Caco-2 (cell line): ENCODE measurements at regions of chr16 and their contacts with region 1.

Region 1: DNA sequence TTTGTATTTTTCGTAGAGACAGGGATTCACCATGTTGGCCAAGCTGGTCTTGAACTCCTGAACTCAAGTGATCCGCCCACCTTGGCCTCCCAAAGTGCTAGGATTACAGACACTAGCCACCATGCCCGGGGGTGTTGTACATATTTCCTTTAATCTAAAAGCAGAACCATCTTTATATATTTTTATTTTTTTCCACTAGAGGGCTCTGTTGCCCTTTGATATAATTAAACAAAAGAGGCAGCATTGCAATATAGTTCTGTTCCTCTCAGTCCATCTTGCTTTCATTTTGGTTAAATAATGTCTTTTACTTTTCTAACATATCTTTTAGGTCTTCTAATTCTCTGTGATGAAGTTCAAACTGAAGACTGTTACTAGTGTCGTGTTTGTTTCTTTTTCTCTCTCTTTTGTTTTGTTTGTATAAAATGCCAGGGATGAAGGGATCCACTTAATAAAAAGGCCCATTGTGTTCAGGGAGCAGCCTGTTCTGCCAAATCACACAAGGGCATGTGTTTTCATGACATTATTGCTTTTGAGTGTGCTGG is 23.4 kb downstream of the WWOX start:
- DNase-seq: peak in 1 of 2 experiments; percentile 59
- H3K4me3 ChIP-seq: no peak overlapping the region
- H3K4me3 Mint-ChIP-seq: peak overlapping the region; percentile 17
- H3K27ac Mint-ChIP-seq: no peak overlapping the region
- H3K4me1 ChIP-seq: 0 out of 2 replicates have a peak, but pooled peaks cover 5% of the 10 kb centered on the region
- H3K4me1 Mint-ChIP-seq: peaks cover 25% of the 10 kb centered on the region
- H3K27me3 ChIP-seq: no peaks in the 10 kb centered on the region
- H3K27me3 Mint-ChIP-seq: no peaks in the 10 kb centered on the region
- CTCF ChIP-seq: peak; percentile 31 to 75

Region 2: GRCh38 chr16:78106686-78107085 is 16.2 kb before region 1 on chr16:
- CTCF ChIA-PET with region 1: no interaction called
- POLR2A ChIA-PET with region 1: no interaction called
- intact Hi-C with region 1: no loop called
- DNase-seq: no peak
- H3K4me3 ChIP-seq: no peak overlapping the region
- H3K4me3 Mint-ChIP-seq: no peak overlapping the region
- H3K27ac Mint-ChIP-seq: no peak overlapping the region
- H3K4me1 ChIP-seq: 0 out of 2 replicates have a peak, but pooled peaks cover 3% of the 10 kb centered on the region
- H3K4me1 Mint-ChIP-seq: peaks cover 7% of the 10 kb centered on the region
- H3K27me3 ChIP-seq: no peaks in the 10 kb centered on the region
- H3K27me3 Mint-ChIP-seq: no peaks in the 10 kb centered on the region
- CTCF ChIP-seq: no peak

Region 3: DNA sequence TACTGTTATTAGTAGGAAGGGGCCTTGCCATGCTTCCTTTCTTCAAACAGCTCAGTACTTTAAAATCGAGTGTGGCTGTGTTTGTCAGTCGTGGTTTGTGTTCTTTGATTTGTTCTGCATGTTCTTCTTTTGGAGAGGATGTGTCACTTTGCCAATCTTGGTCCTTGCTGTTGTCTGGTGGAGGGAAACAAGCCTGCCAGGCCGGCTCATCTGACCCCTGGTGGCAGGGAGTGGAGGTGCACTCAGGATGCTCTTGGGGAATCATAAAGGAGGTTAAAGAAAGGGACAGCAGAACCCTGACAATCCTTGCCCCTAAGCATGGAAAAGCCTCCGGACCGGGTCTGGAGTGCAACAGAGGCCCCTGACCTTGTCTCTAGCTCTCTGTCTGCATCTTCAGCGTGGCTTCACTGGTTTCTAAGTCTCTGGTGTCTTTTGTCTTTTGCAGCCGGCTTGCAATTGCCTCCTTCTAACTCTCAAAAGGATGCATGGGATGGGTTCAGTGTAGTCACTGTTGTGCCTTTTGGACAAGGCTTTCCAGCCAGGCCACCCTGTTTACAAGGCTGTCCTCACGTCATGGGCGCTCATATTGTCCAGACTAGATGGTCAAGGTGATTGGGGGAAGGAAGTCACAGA is 112.4 kb after region 1 on chr16:
- CTCF ChIA-PET with region 1: interaction called, 6 read pairs
- POLR2A ChIA-PET with region 1: no interaction called
- intact Hi-C with region 1: loop called (anchors 1 kb)
- DNase-seq: peak; percentile 82 to 92
- H3K4me3 ChIP-seq: no peak overlapping the region
- H3K4me3 Mint-ChIP-seq: no peak overlapping the region
- H3K27ac Mint-ChIP-seq: no peak overlapping the region
- H3K4me1 ChIP-seq: peaks cover 38% of the 10 kb centered on the region
- H3K4me1 Mint-ChIP-seq: peaks cover 45% of the 10 kb centered on the region
- H3K27me3 ChIP-seq: no peaks in the 10 kb centered on the region
- H3K27me3 Mint-ChIP-seq: no peaks in the 10 kb centered on the region
- CTCF ChIP-seq: peak; percentile 97 to 98

Region 4: GRCh38 chr16:78503602-78504001 is 380.8 kb after region 1 on chr16:
- CTCF ChIA-PET with region 1: interaction called, 5 read pairs
- POLR2A ChIA-PET with region 1: no interaction called
- intact Hi-C with region 1: loop called (anchors 2 kb)
- DNase-seq: peak; percentile 44 to 64
- H3K4me3 ChIP-seq: no peak overlapping the region
- H3K4me3 Mint-ChIP-seq: no peak overlapping the region
- H3K27ac Mint-ChIP-seq: no peak overlapping the region
- H3K4me1 ChIP-seq: peaks cover 25% of the 10 kb centered on the region
- H3K4me1 Mint-ChIP-seq: peaks cover 26% of the 10 kb centered on the region
- H3K27me3 ChIP-seq: no peaks in the 10 kb centered on the region
- H3K27me3 Mint-ChIP-seq: no peaks in the 10 kb centered on the region
- CTCF ChIP-seq: peak; percentile 70 to 88

Region 5: DNA sequence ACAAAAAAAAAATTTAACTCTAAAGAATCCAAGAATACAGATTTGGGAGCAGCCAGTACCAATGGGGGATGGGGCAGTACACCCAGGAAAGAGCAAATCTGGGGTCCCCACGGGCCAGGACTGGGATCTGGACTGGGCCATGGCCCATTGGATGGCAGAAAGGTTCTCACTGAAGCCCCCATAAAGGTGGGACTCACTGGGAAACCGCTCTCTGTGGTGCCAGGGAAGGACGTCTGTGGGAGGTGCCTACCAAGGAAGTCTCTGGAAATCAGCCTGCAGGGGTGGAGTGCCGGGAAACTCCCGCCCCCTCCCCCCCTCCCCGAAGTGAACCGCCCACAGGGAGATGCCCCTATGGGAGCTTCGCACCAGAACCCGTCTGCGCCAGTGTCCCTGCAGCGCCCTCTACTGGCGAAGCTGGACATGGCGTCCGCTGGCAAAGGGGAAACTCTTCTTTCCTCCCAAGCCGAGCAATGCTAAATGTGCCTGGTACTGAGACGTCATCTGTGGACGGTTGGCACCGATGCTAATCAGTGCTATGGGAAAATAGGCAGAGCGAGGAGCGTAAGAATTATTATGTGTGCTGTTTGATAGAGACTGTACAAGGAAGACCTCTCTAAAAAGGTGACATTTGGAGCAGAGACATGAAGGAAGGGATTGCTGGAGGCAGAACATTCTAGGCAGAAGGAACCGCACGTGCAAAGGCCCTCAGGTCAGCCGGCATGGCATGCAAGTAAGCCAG is 647.7 kb after region 1 on chr16:
- CTCF ChIA-PET with region 1: no interaction called
- POLR2A ChIA-PET with region 1: no interaction called
- intact Hi-C with region 1: loop called (anchors 10 kb)
- DNase-seq: peak; percentile 61 to 71
- H3K4me3 ChIP-seq: no peak overlapping the region
- H3K4me3 Mint-ChIP-seq: no peak overlapping the region
- H3K27ac Mint-ChIP-seq: no peak overlapping the region
- H3K4me1 ChIP-seq: no peaks in the 10 kb centered on the region
- H3K4me1 Mint-ChIP-seq: no peaks in the 10 kb centered on the region
- H3K27me3 ChIP-seq: no peaks in the 10 kb centered on the region
- H3K27me3 Mint-ChIP-seq: no peaks in the 10 kb centered on the region
- CTCF ChIP-seq: peak; percentile 59 to 69

Region 6: DNA sequence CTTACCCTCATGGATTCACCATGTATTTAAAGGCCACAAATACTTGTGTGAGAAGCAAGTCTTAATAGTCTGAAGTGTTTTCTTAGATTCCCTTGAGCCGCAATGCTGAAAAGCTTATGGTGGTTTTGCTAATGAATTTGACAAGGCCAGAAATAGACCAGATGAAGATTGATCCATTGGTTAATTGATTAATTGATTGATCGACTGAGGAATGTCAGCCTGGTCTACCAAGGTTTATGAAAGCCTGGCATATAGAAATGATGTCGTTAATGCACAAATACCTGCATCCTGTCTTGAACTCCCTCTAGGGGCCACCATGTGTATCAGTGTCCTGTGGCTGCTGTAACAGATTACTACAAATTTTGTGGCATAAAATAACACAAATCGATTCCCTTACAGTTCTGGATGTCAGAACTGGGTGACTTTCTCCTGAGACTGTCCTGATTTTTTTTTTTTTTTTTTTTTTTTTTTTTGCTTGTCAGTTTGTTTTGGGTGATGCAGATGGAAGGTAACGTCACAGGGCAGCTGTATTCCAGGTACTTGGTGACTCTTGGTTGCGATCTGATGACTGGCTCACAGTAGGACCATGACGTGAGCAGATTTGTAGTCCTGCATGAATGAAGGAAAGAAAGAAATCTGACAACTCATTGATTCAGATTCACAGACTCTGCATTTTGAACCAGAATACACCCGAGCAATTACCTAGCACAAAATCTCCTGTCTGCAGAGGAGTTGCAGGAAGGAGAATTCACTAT is 924.6 kb after region 1 on chr16:
- CTCF ChIA-PET with region 1: no interaction called
- POLR2A ChIA-PET with region 1: no interaction called
- intact Hi-C with region 1: loop called (anchors 2 kb)
- DNase-seq: peak in 1 of 2 experiments; percentile 27
- H3K4me3 ChIP-seq: no peak overlapping the region
- H3K4me3 Mint-ChIP-seq: no peak overlapping the region
- H3K27ac Mint-ChIP-seq: no peak overlapping the region
- H3K4me1 ChIP-seq: no peaks in the 10 kb centered on the region
- H3K4me1 Mint-ChIP-seq: peaks cover 6% of the 10 kb centered on the region
- H3K27me3 ChIP-seq: no peaks in the 10 kb centered on the region
- H3K27me3 Mint-ChIP-seq: no peaks in the 10 kb centered on the region
- CTCF ChIP-seq: peak; percentile 53 to 78

Region 7: DNA sequence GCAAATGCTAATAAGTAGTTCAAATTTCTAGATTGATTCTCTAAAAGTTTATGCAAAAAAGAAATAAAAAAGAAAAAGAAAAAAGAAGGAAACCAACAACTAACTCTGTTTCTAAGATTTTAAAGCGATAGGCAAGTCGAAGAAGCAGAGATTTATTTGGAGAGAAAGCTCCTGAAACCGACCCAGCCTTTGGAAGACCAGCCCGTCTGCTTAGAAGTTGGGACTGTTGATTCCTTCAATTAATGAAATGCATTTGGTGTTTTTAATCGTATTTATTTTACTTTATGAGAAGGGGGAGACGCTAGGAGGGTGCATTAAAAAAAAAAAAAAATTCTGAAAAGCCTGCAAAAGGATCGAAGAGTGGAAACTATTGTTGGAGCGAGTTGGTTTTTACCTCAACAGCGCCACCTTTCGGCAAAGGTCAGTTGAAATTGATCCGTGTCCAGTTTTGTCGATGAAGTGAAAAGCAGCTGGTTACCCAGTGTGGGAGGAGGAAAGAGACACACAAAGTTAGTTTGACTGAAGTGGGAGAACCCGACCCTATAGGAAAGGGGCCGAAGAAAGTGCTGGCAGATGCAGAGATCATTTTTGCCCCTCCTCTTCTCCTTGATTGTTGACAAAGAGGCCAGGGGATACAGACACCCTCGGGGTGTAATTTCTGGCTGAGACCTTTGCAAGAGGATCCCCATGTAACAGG is 1479.2 kb after region 1 on chr16:
- CTCF ChIA-PET with region 1: interaction called, 3 read pairs
- POLR2A ChIA-PET with region 1: no interaction called
- intact Hi-C with region 1: loop called (anchors 2 kb)
- DNase-seq: peak; percentile 77 to 83
- H3K4me3 ChIP-seq: peak overlapping the region; percentile 56
- H3K4me3 Mint-ChIP-seq: peak overlapping the region; percentile 96
- H3K27ac Mint-ChIP-seq: no peak overlapping the region
- H3K4me1 ChIP-seq: peaks cover 9% of the 10 kb centered on the region
- H3K4me1 Mint-ChIP-seq: peaks cover 6% of the 10 kb centered on the region
- H3K27me3 ChIP-seq: peaks cover 6% of the 10 kb centered on the region
- H3K27me3 Mint-ChIP-seq: peaks cover 25% of the 10 kb centered on the region
- CTCF ChIP-seq: peak; percentile 84 to 93